Activated naive CD4-positive, alpha-beta T cell treated with anti-CD3 and anti-CD28 coated beads for 36 hours (primary cell): ENCODE measurements at regions of chr17 and their contacts with region 1.

Region 1: GRCh38 chr17:17001874-17002520 is 30.1 kb upstream of the TNFRSF13B start:
- DNase-seq: peak; percentile 75
- H3K4me3 Mint-ChIP-seq: no peak overlapping the region
- H3K27ac Mint-ChIP-seq: no peak overlapping the region
- H3K4me1 Mint-ChIP-seq: no peaks in the 10 kb centered on the region
- H3K27me3 Mint-ChIP-seq: no peaks in the 10 kb centered on the region

Region 2: DNA sequence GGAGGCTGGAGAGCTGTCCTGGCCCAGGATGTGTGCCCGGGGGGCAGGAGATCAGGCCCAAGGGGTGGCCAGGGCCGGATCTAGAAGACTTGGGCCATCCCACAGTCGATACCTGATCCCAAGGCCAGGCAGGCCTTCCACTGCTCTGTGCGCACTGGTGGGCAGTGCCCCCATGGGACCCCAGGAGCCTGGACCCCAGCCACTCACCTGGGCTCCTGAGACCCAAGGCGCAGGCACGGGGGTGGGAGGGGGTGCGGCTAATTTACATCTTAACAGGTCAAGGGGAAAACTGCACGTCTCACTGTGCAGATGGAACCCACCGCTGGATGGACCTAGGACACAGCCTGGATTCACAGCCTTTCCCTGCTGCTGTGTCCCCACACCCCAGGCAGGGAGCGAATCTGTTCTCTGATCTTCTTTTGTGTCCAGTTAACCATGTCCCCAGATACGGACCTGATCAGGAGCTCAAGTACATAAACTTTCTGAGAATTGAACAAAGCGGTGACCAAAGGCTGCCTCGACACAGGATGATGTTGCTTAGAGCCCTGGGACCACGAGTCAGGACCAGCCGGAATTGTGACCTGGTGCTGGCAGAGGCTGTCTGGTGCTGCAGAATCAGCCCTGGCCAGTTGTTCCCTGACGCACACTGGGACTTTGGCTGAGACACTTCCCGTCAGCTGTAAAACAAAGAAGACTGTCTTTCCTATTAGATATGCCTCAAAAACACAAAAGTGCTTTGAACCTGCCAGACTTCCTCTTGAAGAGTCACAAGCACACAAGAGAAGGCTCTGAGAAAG is 90.7 kb before region 1 on chr17:
- CTCF ChIA-PET with region 1: no interaction called
- intact Hi-C with region 1: no loop called
- DNase-seq: peak; percentile 32
- H3K4me3 Mint-ChIP-seq: no peak overlapping the region
- H3K27ac Mint-ChIP-seq: no peak overlapping the region
- H3K4me1 Mint-ChIP-seq: peaks cover 41% of the 10 kb centered on the region
- H3K27me3 Mint-ChIP-seq: no peaks in the 10 kb centered on the region

Region 3: DNA sequence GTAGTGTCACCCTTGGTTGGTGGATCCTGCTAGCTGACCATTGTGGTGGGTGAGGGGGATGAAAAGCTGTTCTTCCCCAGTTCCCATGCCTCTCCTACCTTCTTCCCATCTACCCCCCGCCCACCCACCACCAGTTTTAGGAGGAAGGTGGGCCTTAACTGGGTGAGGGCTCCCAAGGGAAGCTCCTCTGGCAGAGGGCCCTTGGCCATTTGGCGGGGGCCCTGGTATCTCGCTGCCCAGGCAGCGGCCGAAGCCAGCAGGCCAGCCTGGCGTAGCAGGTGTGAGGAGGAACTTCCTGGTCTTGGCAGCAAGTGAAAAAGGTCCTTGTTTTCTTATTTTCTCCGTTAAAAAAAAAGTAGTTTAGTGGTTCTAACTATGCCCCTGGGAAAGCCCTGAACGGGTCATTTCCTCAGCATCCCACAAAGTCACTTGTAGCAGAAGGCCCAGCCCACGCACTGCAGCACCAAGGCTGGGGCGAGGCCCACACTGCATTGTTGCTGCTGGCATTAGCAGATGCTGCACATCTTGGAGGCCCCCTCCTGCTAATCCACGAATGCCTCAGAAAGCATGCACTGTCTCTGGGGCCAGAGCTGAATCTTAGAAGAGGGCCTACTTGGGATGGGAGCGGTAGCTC is 112.7 kb after region 1 on chr17:
- CTCF ChIA-PET with region 1: no interaction called
- intact Hi-C with region 1: no loop called
- DNase-seq: no peak
- H3K4me3 Mint-ChIP-seq: no peak overlapping the region
- H3K27ac Mint-ChIP-seq: no peak overlapping the region
- H3K4me1 Mint-ChIP-seq: peaks cover 70% of the 10 kb centered on the region
- H3K27me3 Mint-ChIP-seq: no peaks in the 10 kb centered on the region

Region 4: GRCh38 chr17:17125136-17126084 is 123.4 kb after region 1 on chr17:
- CTCF ChIA-PET with region 1: interaction called, 3 read pairs
- intact Hi-C with region 1: loop called (anchors 5 kb)
- DNase-seq: peak; percentile 13
- H3K4me3 Mint-ChIP-seq: no peak overlapping the region
- H3K27ac Mint-ChIP-seq: no peak overlapping the region
- H3K4me1 Mint-ChIP-seq: peaks cover 47% of the 10 kb centered on the region
- H3K27me3 Mint-ChIP-seq: no peaks in the 10 kb centered on the region

Region 5: DNA sequence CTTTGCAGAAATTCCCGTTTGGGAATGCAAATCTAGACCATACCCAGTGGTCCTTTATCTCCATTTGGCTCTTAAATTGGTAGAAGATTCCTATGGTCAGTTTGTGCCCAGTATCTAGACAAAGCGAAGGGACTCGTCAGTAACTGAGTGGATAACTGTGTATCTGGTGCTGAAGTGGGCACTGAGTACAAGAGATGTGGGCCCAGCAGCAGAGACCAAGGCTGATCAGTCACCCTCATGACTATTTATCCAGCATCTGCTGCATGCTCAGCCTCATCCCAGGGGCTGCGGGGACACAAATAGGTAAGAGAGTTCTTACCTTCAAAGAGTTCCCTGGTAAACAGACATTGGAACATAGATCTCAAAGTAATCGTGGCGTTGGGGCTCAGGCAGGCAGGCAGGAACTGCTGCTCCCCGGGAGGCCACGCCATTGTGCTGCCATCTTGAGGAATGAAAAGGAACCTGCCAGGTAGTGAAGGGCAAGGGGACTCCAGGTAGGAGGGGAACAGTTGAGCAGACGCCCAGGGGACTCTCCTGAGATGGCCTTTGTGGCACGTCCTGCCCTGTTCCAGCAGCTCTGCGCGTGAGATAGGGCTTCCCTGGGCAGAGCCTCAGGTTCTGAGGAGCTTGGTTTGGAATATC is 311.5 kb after region 1 on chr17:
- CTCF ChIA-PET with region 1: interaction called, 6 read pairs
- intact Hi-C with region 1: loop called (anchors 1 kb)
- DNase-seq: peak; percentile 84
- H3K4me3 Mint-ChIP-seq: no peak overlapping the region
- H3K27ac Mint-ChIP-seq: no peak overlapping the region
- H3K4me1 Mint-ChIP-seq: peaks cover 6% of the 10 kb centered on the region
- H3K27me3 Mint-ChIP-seq: no peaks in the 10 kb centered on the region